ENCODE measurements at regions of chr20 and their contacts with region 1.

Region 1: DNA sequence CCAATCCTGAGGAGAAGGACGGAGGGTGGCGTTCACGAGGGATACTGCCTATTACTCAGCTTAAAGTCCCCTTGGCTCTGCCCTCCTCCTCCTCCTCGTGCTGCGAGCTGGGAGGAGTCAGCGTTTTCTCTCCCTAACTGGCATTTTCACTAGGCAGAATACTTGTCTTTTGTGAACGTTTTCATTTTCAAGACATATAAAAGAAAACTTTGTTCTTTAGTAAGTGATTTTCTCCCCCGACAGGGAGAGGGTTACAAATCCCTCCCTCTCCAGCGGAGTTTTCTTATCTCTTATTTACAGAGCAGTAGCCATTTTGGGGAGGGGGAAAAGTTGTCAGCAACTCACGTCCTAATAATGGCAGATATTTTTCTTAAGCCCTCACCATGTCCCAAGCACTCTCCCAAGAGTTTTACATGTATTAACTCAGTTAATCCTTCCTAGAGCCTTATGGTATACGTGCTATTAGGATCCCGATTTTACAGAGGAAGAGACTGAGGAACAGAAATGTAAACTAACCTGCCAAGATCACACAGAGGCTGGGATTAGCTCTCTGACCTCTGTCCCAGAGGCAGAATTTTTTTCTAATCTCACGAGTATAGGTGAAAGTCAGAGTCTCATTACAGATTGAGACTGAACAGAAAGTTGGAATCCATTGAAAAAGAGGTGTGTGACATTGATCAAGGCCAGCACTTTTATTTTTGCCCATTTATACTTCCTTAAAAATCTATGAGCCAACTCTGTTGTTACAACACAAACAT is 30.0 kb upstream of the ZNF217 start:
- DNase-seq: peak; percentile 80
- H3K4me3 Mint-ChIP-seq: peak overlapping the region; percentile 57
- H3K27ac Mint-ChIP-seq: peak overlapping the region; percentile 98
- H3K4me1 Mint-ChIP-seq: peaks cover 18% of the 10 kb centered on the region
- H3K27me3 Mint-ChIP-seq: no peaks in the 10 kb centered on the region
- CTCF ChIP-seq: no peak

Region 2: DNA sequence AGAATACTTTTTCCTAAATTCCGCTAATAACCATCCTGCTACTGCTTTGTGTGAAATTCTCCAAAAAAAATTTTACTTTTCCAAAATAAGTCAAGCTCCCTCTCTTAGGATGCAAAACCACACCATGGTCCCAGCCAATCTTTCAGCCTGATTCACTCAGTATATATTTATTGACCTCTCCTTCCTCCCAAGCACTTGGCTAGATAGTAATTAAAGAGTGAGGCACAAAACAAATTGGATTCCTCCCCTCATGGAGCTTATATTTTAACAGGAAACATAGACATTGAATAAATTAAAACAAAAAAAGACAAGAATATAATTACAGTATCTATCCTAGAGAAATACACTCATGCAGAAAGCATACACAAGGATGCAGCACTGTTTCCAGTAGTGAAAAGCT is 21.0 kb before region 1 on chr20:
- CTCF ChIA-PET with region 1: no interaction called
- POLR2A ChIA-PET with region 1: interaction called, 350 read pairs
- intact Hi-C with region 1: no loop called
- DNase-seq: no peak
- H3K4me3 Mint-ChIP-seq: no peak overlapping the region
- H3K27ac Mint-ChIP-seq: no peak overlapping the region
- H3K4me1 Mint-ChIP-seq: peaks cover 21% of the 10 kb centered on the region
- H3K27me3 Mint-ChIP-seq: no peaks in the 10 kb centered on the region
- CTCF ChIP-seq: no peak

Region 3: DNA sequence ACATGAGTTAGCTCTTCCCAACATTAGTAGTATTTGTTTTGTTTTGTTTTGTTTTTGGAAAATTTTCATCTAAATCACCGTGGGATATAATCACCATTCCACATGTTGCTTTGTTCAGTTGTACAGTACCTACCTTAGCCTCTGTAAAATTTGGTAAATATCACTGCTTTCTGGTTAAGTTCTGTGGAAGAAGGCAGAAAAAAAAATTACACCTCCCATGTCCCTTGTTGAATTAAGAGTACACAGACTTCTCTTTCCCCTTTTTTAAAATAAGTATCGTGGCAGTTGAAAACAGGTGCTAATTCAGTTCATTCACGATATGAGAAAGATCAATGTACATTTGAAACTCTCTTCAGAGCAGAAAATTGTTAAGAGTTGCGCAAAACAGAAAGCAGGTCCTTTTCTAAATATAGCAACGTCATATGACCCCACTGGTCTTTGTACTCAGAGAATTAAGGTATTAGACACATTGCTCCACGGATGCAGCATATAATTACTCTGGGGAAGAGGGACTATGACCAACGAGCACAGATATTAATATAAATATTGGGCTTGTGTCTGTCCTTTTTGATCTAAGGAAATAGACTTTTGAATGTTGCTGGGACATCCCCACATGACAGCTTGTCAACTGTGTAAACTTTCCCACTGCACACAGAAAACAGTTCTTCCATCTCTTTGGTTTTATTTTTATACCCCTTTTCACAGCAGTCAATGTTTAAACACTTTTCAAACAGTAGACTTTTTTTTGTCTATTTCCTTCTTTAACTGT is 28.6 kb after region 1 on chr20:
- CTCF ChIA-PET with region 1: interaction called, 10 read pairs
- POLR2A ChIA-PET with region 1: interaction called, 47 read pairs
- intact Hi-C with region 1: no loop called
- DNase-seq: no peak
- H3K4me3 Mint-ChIP-seq: no peak overlapping the region
- H3K27ac Mint-ChIP-seq: no peak overlapping the region
- H3K4me1 Mint-ChIP-seq: peaks cover 15% of the 10 kb centered on the region
- H3K27me3 Mint-ChIP-seq: no peaks in the 10 kb centered on the region
- CTCF ChIP-seq: no peak

Region 4: DNA sequence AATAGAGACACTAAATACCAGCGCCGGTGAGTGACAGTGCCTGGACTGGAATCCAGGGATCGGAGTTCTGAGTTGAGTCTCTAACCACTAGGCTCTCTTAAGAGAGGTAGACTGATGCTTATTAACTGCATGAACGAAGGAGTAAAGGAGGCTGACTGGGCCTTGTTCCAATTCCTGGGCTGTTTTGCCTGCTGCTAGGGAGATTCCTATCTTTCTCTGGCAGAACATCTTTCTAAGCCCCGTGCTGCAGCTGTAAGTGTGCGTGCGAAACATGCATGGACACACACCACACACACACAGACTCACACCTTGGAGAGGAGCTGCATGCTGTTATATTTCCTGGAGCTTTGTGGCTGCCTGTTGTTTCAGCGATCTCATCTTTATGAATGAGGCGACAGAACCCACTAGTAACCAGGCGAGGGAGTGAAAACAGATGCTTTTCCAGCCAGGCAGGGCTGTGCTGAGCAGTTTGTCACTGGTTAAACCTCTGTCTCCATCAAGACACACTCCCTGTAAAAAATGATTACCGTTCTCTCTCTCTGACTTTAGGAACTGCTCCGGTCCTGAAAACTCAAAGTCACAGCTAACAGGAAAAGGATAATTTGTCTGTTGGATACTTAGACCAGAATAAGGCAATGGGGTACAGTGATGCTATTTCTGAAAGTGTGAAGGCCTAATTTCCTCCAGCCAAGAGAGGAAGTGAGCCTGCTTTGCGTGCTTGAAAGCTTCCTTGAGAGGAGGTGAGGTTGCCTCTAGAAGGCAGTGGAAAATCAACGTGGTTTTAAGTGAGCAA is 127.4 kb after region 1 on chr20:
- CTCF ChIA-PET with region 1: interaction called, 5 read pairs
- POLR2A ChIA-PET with region 1: interaction called, 38 read pairs
- intact Hi-C with region 1: no loop called
- DNase-seq: no peak
- H3K4me3 Mint-ChIP-seq: no peak overlapping the region
- H3K27ac Mint-ChIP-seq: peak overlapping the region; percentile 83
- H3K4me1 Mint-ChIP-seq: peaks cover 29% of the 10 kb centered on the region
- H3K27me3 Mint-ChIP-seq: no peaks in the 10 kb centered on the region
- CTCF ChIP-seq: no peak

Region 5: GRCh38 chr20:53869466-53870258 is 246.0 kb after region 1 on chr20:
- CTCF ChIA-PET with region 1: interaction called, 19 read pairs
- POLR2A ChIA-PET with region 1: interaction called, 57 read pairs
- intact Hi-C with region 1: loop called (anchors 2 kb)
- DNase-seq: peak; percentile 90
- H3K4me3 Mint-ChIP-seq: peak overlapping the region; percentile 36
- H3K27ac Mint-ChIP-seq: peak overlapping the region; percentile 96
- H3K4me1 Mint-ChIP-seq: peaks cover 49% of the 10 kb centered on the region
- H3K27me3 Mint-ChIP-seq: no peaks in the 10 kb centered on the region
- CTCF ChIP-seq: peak; percentile 65

Region 6: GRCh38 chr20:53939572-53940359 is 316.1 kb after region 1 on chr20:
- CTCF ChIA-PET with region 1: interaction called, 5 read pairs
- POLR2A ChIA-PET with region 1: interaction called, 13 read pairs
- intact Hi-C with region 1: no loop called
- DNase-seq: peak; percentile 95
- H3K4me3 Mint-ChIP-seq: no peak overlapping the region
- H3K27ac Mint-ChIP-seq: peak overlapping the region; percentile 18
- H3K4me1 Mint-ChIP-seq: peaks cover 19% of the 10 kb centered on the region
- H3K27me3 Mint-ChIP-seq: no peaks in the 10 kb centered on the region
- CTCF ChIP-seq: peak; percentile 73